ENCODE measurements at regions of chr11 and their contacts with region 1.

Region 1: GRCh38 chr11:94417386-94417987 is 16.3 kb upstream of the GPR83 start:
- DNase-seq: peak; percentile 14
- H3K4me3 ChIP-seq: no peak overlapping the region
- CTCF ChIP-seq: peak; percentile 51

Region 2: DNA sequence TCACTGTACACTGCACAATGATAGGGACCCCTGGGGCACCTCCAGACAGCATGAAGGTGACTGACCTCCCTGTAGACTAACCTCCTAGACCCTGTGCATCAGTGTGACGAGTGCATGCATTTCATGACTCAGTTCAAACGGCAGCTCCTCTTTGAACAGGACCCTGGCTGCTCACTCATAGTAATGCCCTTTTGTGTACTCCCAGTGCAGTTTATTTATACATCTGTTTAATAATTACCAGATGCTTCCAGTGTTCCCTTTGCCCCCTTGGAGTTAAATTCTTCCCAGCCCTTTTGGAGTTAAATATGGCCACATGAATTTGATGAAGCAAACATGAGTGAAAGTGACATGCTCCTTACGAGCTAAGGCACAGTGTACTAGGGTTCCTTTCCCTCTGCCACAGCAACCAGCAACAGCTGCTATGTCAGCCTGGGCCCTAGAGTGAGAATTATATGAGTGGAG is 216.5 kb before region 1 on chr11:
- CTCF ChIA-PET with region 1: interaction called, 13 read pairs
- POLR2A ChIA-PET with region 1: no interaction called
- DNase-seq: peak; percentile 33
- H3K4me3 ChIP-seq: no peak overlapping the region
- CTCF ChIP-seq: no peak

Region 3: GRCh38 chr11:94405062-94405833 is 12.2 kb before region 1 on chr11:
- CTCF ChIA-PET with region 1: interaction called, 31 read pairs
- POLR2A ChIA-PET with region 1: no interaction called
- DNase-seq: no peak
- H3K4me3 ChIP-seq: no peak overlapping the region
- CTCF ChIP-seq: no peak

Region 4: GRCh38 chr11:94583866-94584500 is 166.5 kb after region 1 on chr11:
- CTCF ChIA-PET with region 1: no interaction called
- POLR2A ChIA-PET with region 1: no interaction called
- DNase-seq: no peak
- H3K4me3 ChIP-seq: no peak overlapping the region
- CTCF ChIP-seq: no peak

Region 5: DNA sequence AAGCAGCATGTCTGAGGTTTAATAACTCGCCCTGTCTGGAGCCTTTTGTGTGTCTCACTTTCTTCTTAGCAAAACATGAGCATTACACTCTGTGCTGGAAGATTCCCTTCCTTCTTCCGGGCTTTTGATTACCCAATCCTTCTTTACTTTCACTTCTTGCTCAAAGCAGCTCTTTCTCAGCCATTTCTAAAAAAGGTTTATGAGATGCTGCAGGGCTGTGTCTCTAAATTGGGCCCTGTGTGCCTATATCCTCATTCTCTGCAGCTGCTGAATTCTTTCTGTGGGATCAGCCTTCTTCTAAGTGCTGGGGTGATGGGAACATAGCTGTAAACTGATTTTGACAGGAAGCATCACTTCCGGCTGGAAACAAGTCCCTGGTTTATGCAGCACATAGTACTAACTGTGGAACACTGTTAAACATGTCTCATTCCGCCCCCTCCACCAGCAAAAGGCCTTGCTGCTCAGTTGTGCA is 221.5 kb after region 1 on chr11:
- CTCF ChIA-PET with region 1: no interaction called
- POLR2A ChIA-PET with region 1: no interaction called
- DNase-seq: peak; percentile 21
- H3K4me3 ChIP-seq: no peak overlapping the region
- CTCF ChIP-seq: no peak

Region 6: DNA sequence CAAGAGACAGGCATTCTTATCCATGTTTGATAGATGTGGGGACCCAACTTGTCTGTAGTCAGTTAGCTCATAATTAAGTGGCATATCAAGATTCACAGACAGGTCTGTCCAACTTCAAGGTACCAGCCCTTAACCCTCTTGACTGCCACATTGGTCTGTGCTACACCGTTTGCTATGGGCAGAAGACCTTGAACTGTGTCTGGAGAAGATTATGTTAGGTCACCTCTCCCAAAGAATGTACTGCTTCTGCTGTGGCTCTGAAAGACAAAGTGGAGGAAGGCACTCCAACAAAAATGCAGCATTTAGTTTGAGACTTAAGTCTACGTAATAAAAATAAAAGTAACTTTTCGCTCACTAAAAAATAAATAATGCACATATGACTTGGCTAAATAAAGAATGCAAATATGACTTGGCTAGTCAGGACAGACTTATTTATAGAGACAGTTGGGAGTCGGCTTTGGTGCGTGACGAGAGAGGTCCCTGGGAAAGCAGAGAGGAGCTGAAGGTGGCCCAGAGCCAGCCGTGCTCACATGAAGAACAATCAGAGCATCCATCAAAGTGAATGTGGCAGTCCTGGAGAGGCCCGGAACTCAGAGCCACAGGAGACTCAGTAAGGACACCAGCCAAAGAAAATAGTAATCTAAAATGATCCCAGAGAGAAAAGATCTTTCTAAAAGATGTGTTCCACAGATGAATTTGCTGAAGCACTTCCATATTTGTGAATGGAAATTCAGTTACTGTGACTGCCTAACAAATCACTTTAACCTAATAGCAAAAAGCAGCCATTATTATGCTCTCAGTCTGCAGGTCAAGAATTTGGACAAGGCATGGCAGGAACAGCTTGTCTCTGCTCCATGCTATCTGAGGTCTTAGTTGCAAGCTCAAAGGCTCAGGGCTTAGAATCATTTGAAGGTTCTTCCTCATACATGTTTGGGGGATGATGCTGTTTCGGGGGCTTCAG is 520.9 kb after region 1 on chr11:
- CTCF ChIA-PET with region 1: no interaction called
- POLR2A ChIA-PET with region 1: no interaction called
- DNase-seq: peak; percentile 76
- H3K4me3 ChIP-seq: no peak overlapping the region
- CTCF ChIP-seq: no peak

Measured in AG04449 (cell line).